CD8-positive, alpha-beta T cell (primary cell): ENCODE measurements at regions of chr2 and their contacts with region 1.

Region 1: DNA sequence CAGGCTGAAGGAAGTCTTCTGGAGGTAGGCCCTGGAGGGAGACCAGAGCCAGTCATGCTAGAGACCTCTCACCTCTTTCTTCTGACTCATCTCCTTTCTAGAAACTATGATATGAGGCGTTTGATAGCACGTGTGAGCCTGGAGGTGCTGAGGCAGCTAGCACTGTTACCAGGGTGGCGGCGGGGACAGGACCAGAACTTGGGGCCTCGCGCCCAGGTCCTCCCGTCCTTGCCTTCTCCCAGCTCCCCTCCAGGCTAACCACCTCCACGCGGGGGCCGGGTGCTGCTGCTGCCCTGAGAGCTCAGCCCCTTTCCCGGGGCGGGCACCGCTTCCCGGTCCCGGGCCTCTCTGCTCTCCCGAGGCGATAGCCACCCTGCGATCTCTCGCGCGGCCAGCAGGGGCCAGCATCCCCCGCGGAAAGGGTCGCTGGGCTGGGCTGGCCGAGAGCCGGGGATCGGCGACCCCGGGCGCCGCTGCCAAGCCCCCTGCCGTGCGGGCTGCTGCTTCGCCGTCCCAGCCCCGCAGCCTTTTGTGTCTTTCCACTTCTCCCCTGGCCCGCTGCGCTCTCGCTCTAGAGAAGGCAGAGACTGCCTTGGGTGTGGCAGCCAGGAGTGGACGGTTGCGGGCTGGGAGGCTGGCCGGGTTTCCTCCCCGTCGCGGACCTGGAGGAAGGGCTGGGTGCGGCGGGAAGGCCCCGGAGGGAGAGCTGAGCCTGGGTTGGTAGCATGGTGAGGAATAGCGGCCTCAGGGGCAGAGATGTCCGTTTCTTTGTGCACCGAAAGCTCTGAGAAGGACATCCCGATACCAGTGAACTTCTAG is 49.1 kb downstream of the TMEM17 start:
- DNase-seq: peak; percentile 44 to 80 (median 66)
- ATAC-seq: peak; percentile 92
- H3K4me3 ChIP-seq: peak overlapping the region; percentile 44 to 50
- H3K4me3 Mint-ChIP-seq: peak overlapping the region; percentile 63
- H3K27ac ChIP-seq: no peak overlapping the region
- H3K27ac Mint-ChIP-seq: no peak overlapping the region
- H3K4me1 ChIP-seq: no peaks in the 10 kb centered on the region
- H3K4me1 Mint-ChIP-seq: no peaks in the 10 kb centered on the region
- H3K27me3 ChIP-seq: peaks cover 0 to 3% of the 10 kb centered on the region in 2 experiments
- H3K27me3 Mint-ChIP-seq: peaks cover 4% of the 10 kb centered on the region
- CTCF ChIP-seq: peak; percentile 87

Region 2: DNA sequence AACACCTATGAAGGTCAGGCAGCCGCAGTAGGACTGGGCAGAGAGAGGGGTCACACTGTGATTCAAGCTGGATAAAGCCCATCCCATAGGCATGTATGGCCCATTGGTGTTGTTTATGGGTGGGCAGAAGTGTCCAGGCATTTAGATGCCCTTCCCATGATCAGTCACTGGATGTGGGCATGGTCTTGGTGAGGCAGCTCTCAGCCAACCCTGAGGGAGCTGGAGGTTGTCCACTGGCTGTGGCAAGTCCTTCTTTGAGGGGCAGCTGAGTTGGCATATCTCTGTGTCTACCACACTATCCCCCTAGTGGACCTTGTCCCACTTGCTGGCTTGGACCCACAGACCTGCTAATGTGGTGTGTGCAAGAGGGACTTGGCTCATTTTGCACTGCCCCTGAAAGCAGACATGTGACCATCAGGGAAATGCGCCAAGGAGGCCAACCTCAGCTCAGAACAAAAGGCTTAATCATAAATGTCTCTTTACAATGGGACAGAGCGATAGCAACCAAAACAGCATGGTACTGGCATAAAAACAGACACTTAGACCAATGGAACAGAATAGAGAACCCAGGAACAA is 33.0 kb before region 1 on chr2:
- CTCF ChIA-PET with region 1: no interaction called
- POLR2A ChIA-PET with region 1: no interaction called
- intact Hi-C with region 1: no loop called
- DNase-seq: no peak
- ATAC-seq: no peak
- H3K4me3 ChIP-seq: no peak overlapping the region
- H3K4me3 Mint-ChIP-seq: no peak overlapping the region
- H3K27ac ChIP-seq: no peak overlapping the region
- H3K27ac Mint-ChIP-seq: no peak overlapping the region
- H3K4me1 ChIP-seq: no peaks in the 10 kb centered on the region
- H3K4me1 Mint-ChIP-seq: no peaks in the 10 kb centered on the region
- H3K27me3 ChIP-seq: no peaks in the 10 kb centered on the region
- H3K27me3 Mint-ChIP-seq: no peaks in the 10 kb centered on the region
- CTCF ChIP-seq: no peak

Region 3: DNA sequence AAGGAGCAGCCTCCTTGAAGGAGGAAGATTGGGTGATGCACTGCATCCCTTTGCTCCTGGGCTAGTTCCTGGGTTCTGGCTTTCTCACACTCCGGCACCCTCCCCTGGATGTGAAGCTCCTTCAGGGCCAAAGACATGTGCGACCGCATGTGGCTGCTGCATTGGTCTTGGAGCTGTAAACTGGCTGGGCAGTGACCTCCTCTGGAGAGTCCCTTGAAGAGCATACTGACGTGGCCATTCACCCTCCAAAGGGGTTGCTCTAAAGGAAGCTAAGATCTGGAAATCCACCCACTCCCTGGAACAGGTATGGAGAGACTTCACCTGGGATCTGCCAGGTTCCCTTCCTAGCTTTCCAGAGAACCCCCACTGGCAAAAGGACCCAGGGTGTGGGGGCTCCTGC is 13.0 kb before region 1 on chr2:
- CTCF ChIA-PET with region 1: interaction called, 23 read pairs
- POLR2A ChIA-PET with region 1: no interaction called
- intact Hi-C with region 1: no loop called
- DNase-seq: no peak
- ATAC-seq: no peak
- H3K4me3 ChIP-seq: no peak overlapping the region
- H3K4me3 Mint-ChIP-seq: no peak overlapping the region
- H3K27ac ChIP-seq: no peak overlapping the region
- H3K27ac Mint-ChIP-seq: no peak overlapping the region
- H3K4me1 ChIP-seq: no peaks in the 10 kb centered on the region
- H3K4me1 Mint-ChIP-seq: no peaks in the 10 kb centered on the region
- H3K27me3 ChIP-seq: no peaks in the 10 kb centered on the region
- H3K27me3 Mint-ChIP-seq: no peaks in the 10 kb centered on the region
- CTCF ChIP-seq: no peak

Region 4: GRCh38 chr2:62475172-62476011 is 18.5 kb after region 1 on chr2:
- CTCF ChIA-PET with region 1: interaction called, 36 read pairs
- POLR2A ChIA-PET with region 1: interaction called, 3 read pairs
- intact Hi-C with region 1: no loop called
- DNase-seq: peak in 3 of 9 experiments; percentile 16 to 48 (median 28)
- ATAC-seq: peak; percentile 20
- H3K4me3 ChIP-seq: peak overlapping the region in 1 of 2 experiments; percentile 23
- H3K4me3 Mint-ChIP-seq: peak overlapping the region; percentile 65
- H3K27ac ChIP-seq: peak overlapping the region in 1 of 2 experiments; percentile 26
- H3K27ac Mint-ChIP-seq: no peak overlapping the region
- H3K4me1 ChIP-seq: peaks cover 3% of the 10 kb centered on the region
- H3K4me1 Mint-ChIP-seq: peaks cover 9% of the 10 kb centered on the region
- H3K27me3 ChIP-seq: no peaks in the 10 kb centered on the region
- H3K27me3 Mint-ChIP-seq: peaks cover 1% of the 10 kb centered on the region
- CTCF ChIP-seq: no peak

Region 5: DNA sequence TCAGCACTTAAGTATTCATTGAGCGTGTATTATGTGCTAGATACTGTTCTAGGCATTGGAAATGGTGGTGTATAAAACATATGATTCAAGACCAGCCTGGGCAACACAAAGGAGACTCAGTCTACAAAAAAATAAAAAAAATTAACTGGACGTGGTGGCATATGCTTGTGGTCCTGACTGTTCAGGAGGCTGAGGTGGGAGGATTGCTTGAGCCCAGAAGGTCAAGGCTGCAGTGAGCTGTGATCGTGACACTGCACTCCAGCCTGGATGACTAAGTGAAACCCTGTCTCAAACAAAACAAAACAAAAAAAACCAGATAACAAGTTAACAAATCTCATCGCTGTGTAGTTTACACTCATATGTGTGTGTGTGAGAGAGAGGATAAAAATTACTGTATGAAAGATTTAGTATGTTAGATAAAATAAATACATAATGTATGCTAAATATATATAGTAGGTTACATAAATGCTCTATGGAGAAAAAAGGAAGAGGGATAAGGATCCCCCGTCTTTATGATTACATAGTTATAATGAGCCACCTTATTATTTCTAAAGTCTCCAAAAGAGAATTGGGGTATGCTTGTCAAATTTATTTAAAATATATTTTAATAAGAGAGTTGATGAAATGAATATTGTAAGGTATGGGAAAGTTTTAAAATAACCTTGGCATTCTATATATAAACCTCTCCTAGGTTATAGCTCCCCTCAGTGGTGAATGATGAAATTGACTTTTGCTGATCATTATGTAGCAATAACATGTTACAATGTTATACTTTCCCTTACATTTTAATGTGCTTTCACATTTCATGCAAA is 317.8 kb after region 1 on chr2:
- CTCF ChIA-PET with region 1: interaction called, 235 read pairs
- POLR2A ChIA-PET with region 1: interaction called, 3 read pairs
- intact Hi-C with region 1: loop called (anchors 1 kb)
- DNase-seq: peak in 3 of 9 experiments; percentile 7 to 56 (median 48)
- ATAC-seq: no peak
- H3K4me3 ChIP-seq: no peak overlapping the region
- H3K4me3 Mint-ChIP-seq: no peak overlapping the region
- H3K27ac ChIP-seq: no peak overlapping the region
- H3K27ac Mint-ChIP-seq: no peak overlapping the region
- H3K4me1 ChIP-seq: no peaks in the 10 kb centered on the region
- H3K4me1 Mint-ChIP-seq: no peaks in the 10 kb centered on the region
- H3K27me3 ChIP-seq: no peaks in the 10 kb centered on the region
- H3K27me3 Mint-ChIP-seq: no peaks in the 10 kb centered on the region
- CTCF ChIP-seq: peak; percentile 90

Region 6: DNA sequence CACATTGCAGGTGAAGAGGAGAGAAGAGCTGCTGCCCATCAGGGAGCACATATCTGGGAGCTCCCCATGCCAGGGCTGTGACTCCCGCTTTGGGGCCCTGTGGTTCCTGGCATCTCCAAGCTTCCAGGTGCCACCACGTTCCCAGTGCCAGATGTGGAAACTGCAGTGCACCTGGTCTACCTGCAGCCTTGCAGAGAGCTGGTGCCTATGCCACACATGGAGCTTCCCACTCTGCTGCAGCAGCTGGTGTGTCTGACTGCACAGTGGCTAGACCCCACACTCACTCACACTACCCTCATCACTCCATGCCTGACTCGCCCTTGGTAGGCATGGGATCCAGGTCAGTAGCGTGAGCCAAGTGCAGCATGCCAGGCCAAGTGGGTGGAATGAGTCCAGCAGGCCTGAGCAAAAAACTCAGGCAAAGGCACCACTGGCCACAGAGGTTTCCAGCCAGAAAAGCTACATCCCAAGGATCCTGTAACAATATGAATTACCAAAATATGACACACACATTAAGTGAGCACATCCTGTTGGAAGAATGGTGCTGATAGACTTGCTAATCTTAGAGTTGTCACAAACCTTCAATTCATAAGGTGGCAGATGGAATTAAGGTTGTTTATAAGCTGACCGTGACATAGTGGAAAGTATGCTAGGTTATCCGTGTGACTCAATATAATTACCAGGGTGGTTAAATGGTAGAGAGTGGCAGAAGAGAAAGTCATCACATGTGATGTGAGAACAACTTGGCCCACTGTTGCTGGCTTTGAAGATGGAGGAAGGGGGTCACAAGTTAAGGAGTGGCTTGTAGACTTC is 399.5 kb after region 1 on chr2:
- CTCF ChIA-PET with region 1: no interaction called
- POLR2A ChIA-PET with region 1: no interaction called
- intact Hi-C with region 1: no loop called
- DNase-seq: no peak
- ATAC-seq: no peak
- H3K4me3 ChIP-seq: no peak overlapping the region
- H3K4me3 Mint-ChIP-seq: no peak overlapping the region
- H3K27ac ChIP-seq: no peak overlapping the region
- H3K27ac Mint-ChIP-seq: no peak overlapping the region
- H3K4me1 ChIP-seq: no peaks in the 10 kb centered on the region
- H3K4me1 Mint-ChIP-seq: no peaks in the 10 kb centered on the region
- H3K27me3 ChIP-seq: no peaks in the 10 kb centered on the region
- H3K27me3 Mint-ChIP-seq: no peaks in the 10 kb centered on the region
- CTCF ChIP-seq: no peak

Region 7: DNA sequence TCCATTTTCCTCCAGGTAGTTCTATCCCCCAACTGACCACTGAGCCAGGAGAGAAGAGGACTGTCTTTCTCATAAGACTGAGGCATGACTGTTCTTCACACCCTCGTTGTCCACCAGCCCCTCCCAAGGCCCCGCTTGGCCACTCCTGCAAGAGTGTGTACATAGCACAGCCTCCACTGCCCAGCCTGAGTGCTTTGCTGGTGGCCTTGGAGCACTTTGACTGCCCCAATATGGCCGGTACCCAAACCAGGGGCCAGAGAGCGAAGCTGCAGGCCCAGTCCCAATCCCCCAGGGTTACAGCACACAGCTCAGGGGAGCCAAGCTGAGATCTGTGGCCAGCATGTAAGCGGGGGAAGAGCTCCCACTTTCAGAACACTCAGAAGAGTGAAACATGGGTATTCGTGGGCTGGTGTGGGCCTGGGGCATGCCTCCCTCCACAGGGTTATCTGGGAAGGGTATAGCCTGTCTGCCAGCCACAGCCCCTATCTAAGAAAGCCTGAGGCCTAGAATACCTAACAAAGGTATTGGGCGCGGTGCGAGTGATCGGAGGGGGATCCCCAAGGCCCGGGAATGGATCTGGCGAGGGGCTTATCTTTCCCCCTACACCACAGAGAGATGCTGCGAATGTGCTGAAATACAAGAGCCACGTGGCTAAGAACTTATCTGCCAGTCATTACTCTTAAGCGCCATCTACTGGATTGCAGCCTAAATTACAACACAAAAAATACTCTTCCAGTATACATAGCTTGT is 967.6 kb after region 1 on chr2:
- CTCF ChIA-PET with region 1: no interaction called
- POLR2A ChIA-PET with region 1: no interaction called
- intact Hi-C with region 1: loop called in 1 of 2 experiments (anchors 5 kb)
- DNase-seq: peak in 2 of 9 experiments; percentile 35 to 53
- ATAC-seq: no peak
- H3K4me3 ChIP-seq: no peak overlapping the region
- H3K4me3 Mint-ChIP-seq: no peak overlapping the region
- H3K27ac ChIP-seq: no peak overlapping the region
- H3K27ac Mint-ChIP-seq: no peak overlapping the region
- H3K4me1 ChIP-seq: no peaks in the 10 kb centered on the region
- H3K4me1 Mint-ChIP-seq: no peaks in the 10 kb centered on the region
- H3K27me3 ChIP-seq: no peaks in the 10 kb centered on the region
- H3K27me3 Mint-ChIP-seq: no peaks in the 10 kb centered on the region
- CTCF ChIP-seq: peak; percentile 56

Region 8: DNA sequence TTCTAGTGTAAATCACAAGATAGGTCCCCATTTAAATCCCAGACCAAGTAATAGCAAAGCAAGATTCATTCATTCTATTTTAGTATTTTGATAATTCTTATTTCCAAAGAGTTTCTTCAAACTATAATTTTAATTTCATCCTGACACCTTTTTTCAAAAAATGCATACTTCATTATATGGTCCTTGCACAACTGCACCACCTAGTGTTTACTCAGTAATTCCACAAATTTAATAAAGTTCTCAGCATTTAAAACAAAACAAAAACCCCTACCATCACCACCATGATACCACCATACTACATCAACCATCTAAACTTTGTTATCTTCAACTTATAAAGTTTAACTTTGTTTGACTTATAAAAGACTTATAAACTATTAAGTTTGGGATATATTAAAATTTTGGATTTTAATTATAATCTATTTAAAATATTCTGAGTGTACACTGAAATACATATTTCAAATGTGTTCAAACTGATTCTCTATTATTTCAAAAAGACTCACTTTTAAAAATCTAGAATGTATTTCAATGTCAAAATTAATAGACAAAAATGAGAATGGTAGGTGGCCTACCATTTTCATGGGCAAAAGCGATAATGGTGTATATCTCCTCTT is 1087.2 kb after region 1 on chr2:
- CTCF ChIA-PET with region 1: interaction called, 3 read pairs
- POLR2A ChIA-PET with region 1: no interaction called
- intact Hi-C with region 1: loop called (anchors 5 to 10 kb)
- DNase-seq: peak in 2 of 9 experiments; percentile 3 to 22
- ATAC-seq: no peak
- H3K4me3 ChIP-seq: no peak overlapping the region
- H3K4me3 Mint-ChIP-seq: no peak overlapping the region
- H3K27ac ChIP-seq: no peak overlapping the region
- H3K27ac Mint-ChIP-seq: no peak overlapping the region
- H3K4me1 ChIP-seq: no peaks in the 10 kb centered on the region
- H3K4me1 Mint-ChIP-seq: no peaks in the 10 kb centered on the region
- H3K27me3 ChIP-seq: no peaks in the 10 kb centered on the region
- H3K27me3 Mint-ChIP-seq: no peaks in the 10 kb centered on the region
- CTCF ChIP-seq: peak; percentile 47